ENCODE measurements at regions of chr5 and their contacts with region 1.

Region 1: DNA sequence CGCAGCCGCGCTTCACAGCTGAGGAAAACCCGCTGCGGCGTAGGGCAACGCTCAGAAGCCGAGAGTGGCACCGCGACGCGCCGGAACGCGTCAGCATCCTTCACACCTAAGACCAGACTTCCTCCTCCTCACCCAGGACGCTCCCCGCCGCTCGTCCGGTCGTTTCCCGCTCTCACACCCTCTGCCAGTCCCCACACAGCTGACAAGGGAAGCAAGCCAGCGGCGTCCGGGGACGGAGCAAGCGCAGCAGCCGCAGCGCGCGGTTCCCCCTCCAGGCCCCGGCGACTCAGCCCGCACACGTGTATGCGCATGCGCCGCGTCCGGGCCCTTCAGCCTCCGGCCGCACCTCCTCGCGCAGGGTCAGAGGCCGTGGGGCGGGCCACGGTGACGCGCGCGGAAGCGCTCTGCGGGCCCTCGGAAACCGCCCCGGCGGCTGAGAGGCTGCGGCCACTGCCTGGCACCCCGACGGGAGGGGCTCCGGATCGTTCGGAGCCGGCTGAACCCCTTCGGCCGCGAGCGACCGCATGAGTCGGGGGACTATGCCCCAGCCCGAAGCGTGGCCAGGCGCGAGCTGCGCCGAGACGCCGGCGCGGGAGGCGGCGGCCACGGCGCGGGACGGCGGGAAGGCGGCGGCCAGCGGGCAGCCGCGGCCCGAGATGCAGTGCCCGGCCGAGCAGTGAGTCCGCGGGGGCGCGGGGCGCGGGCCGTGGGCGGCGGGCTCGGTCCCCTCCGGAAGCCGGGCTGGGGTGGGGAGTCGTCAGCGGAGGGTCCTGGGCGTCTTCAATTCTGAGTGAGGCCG is at the start of gene OTULIN:
- DNase-seq: peak; percentile 90
- ATAC-seq: peak; percentile 78
- H3K4me3 Mint-ChIP-seq: peak within 1 kb of the TSS; percentile 97
- H3K27ac Mint-ChIP-seq: peak within 1 kb of the TSS; percentile 99
- H3K4me1 Mint-ChIP-seq: peaks cover 87% of the 10 kb centered on the region
- H3K27me3 Mint-ChIP-seq: no peaks in the 10 kb centered on the region
- CTCF ChIP-seq: no peak
- total RNA-seq, gene OTULIN: 94.0 and 96.5 TPM in 2 replicates

Region 2: GRCh38 chr5:14011089-14012004 is 653.2 kb before region 1 on chr5:
- CTCF ChIA-PET with region 1: no interaction called
- POLR2A ChIA-PET with region 1: no interaction called
- intact Hi-C with region 1: loop called (anchors 2 kb)
- DNase-seq: peak; percentile 72
- ATAC-seq: peak; percentile 89
- H3K4me3 Mint-ChIP-seq: peak overlapping the region; percentile 85
- H3K27ac Mint-ChIP-seq: peak overlapping the region; percentile 73
- H3K4me1 Mint-ChIP-seq: peaks cover 10% of the 10 kb centered on the region
- H3K27me3 Mint-ChIP-seq: peaks cover 20% of the 10 kb centered on the region
- CTCF ChIP-seq: no peak

Region 3: GRCh38 chr5:14264604-14265316 is 399.7 kb before region 1 on chr5:
- CTCF ChIA-PET with region 1: no interaction called
- POLR2A ChIA-PET with region 1: no interaction called
- intact Hi-C with region 1: loop called (anchors 10 kb)
- DNase-seq: peak; percentile 79
- ATAC-seq: peak; percentile 98
- H3K4me3 Mint-ChIP-seq: peak overlapping the region; percentile 81
- H3K27ac Mint-ChIP-seq: peak overlapping the region; percentile 69
- H3K4me1 Mint-ChIP-seq: peaks cover 78% of the 10 kb centered on the region
- H3K27me3 Mint-ChIP-seq: no peaks in the 10 kb centered on the region
- CTCF ChIP-seq: no peak

Region 4: DNA sequence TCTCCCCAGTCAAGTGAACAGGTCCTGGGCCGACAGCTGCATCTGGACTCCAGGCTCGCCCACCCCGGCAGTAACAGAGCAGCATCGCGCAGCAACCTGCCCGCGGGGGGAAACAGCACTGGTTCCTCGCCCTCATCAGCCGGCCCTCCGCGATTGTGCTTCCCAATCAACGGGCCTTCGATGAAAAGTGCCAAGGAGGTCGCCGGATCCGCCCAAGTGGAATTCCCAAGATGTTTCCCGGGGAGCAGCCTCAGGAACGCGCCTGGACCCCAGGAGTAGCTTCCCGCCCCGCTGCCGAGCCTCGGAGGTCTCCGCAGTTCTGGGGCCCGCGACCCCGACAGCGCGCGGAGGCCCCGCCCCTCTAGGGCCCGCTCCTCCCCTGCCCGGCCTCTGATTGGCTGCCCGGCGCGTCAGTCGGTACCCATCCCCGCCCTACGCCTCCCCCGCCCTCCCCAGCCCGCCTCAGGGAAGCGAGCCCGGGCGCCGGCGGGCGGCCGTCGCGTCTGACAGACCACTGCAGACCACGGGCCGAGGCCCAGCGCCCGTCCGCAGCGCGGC is 83.1 kb before region 1 on chr5 and contains the start of gene OTULINL:
- CTCF ChIA-PET with region 1: no interaction called
- POLR2A ChIA-PET with region 1: no interaction called
- intact Hi-C with region 1: loop called (anchors 1 kb)
- DNase-seq: peak; percentile 80
- ATAC-seq: peak; percentile 98
- H3K4me3 Mint-ChIP-seq: peak within 1 kb of the TSS; percentile 74
- H3K27ac Mint-ChIP-seq: no peak within 1 kb of the TSS
- H3K4me1 Mint-ChIP-seq: peaks cover 3% of the 10 kb centered on the region
- H3K27me3 Mint-ChIP-seq: peaks cover 25% of the 10 kb centered on the region
- CTCF ChIP-seq: no peak
- total RNA-seq, gene OTULINL: 0.27 and 0.69 TPM in 2 replicates

Region 5: DNA sequence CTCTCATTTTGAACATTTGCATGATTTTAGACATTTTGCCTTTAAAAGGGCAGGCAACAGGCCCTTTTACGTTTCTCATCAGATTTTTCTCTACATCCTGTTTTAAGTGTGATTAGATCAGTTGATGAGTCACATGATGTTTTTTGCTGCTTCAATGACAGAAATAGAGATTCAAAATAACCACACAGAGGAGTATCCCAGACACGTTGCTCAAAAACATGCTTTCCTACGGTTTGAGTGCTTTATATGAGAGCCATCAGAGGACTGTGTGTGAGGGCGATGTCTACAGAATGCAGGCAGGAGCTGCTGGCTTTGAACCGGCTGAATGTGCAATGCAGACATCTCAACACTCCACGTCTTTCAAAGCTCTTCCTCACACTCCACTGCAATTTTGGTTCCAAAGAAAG is 42.1 kb after region 1 on chr5:
- CTCF ChIA-PET with region 1: no interaction called
- POLR2A ChIA-PET with region 1: no interaction called
- intact Hi-C with region 1: no loop called
- DNase-seq: no peak
- ATAC-seq: peak; percentile 56
- H3K4me3 Mint-ChIP-seq: no peak overlapping the region
- H3K27ac Mint-ChIP-seq: peak overlapping the region; percentile 67
- H3K4me1 Mint-ChIP-seq: peaks cover 23% of the 10 kb centered on the region
- H3K27me3 Mint-ChIP-seq: no peaks in the 10 kb centered on the region
- CTCF ChIP-seq: no peak

Region 6: DNA sequence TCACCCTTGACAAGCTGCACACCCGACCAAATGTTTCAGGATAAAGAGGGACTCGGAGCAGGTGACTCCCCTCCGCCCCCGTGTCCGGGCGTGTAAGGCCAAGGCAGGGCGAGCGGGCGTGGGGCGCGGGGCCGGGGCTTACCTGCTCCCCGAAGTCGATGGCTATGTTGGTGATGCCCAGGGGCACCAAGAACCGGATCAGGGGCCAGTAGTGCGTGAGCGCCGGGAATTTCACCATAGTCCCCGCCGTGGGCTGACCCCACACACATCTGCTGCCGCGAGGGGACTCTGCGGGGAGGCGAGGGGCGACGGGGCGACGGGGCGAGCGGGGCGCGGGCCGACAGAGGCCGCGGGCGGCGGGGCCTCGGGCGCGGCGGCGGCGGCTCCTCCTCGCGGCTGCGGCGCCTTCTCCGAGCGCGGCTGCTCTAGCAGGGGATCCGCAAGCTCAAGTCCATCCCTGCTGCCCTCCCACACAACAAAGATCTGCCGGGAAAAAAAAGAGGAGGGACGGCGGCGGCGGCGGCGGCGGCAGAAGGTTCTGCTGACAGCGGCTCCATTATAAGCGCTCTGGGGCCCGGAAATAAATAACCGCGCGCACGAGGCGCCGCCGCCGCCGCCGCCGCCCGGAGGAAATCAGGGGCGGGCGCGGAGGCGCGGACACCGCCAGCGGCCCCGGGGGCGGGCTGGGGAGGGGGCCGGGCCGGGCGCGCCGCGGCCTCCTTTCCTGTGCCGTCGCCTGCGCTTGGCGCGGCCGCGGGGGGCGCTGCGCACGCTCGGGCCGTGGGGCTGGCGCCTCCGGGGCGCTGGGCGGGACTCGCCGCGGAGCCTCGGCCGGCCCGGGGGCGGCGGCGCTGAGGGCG is 206.9 kb after region 1 on chr5 and contains the start of gene ANKH:
- CTCF ChIA-PET with region 1: interaction called, 3 read pairs
- POLR2A ChIA-PET with region 1: no interaction called
- intact Hi-C with region 1: loop called (anchors 2 kb)
- DNase-seq: peak; percentile 86
- ATAC-seq: peak; percentile 88
- H3K4me3 Mint-ChIP-seq: peak within 1 kb of the TSS; percentile 87
- H3K27ac Mint-ChIP-seq: peak within 1 kb of the TSS; percentile 80
- H3K4me1 Mint-ChIP-seq: peaks cover 22% of the 10 kb centered on the region
- H3K27me3 Mint-ChIP-seq: no peaks in the 10 kb centered on the region
- CTCF ChIP-seq: no peak
- total RNA-seq, gene ANKH: 43.3 and 43.7 TPM in 2 replicates

Region 7: DNA sequence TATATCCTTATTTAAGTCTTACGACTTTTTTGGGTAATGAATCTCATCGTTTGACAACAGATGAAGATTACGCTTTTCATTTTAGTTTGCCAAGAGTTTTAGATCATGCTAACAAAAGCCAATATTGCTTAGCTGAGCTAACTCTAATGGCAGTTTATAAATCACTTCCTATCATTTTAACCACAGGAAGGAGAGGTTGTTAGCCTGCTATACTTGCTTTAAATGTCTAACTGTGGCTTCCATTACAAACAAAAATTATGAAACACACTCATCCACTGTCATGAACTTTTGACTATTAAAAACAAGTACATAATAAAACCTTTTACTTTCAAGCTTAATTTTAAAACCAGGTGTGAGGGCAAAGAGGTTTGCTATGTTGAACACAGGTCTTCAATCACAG is 260.8 kb after region 1 on chr5:
- CTCF ChIA-PET with region 1: no interaction called
- POLR2A ChIA-PET with region 1: no interaction called
- intact Hi-C with region 1: no loop called
- DNase-seq: no peak
- ATAC-seq: no peak
- H3K4me3 Mint-ChIP-seq: no peak overlapping the region
- H3K27ac Mint-ChIP-seq: no peak overlapping the region
- H3K4me1 Mint-ChIP-seq: no peaks in the 10 kb centered on the region
- H3K27me3 Mint-ChIP-seq: no peaks in the 10 kb centered on the region
- CTCF ChIP-seq: no peak

Region 8: GRCh38 chr5:16465544-16466466 is 1801.3 kb after region 1 on chr5 and contains the start of gene ZNF622:
- CTCF ChIA-PET with region 1: no interaction called
- POLR2A ChIA-PET with region 1: no interaction called
- intact Hi-C with region 1: loop called (anchors 5 kb)
- DNase-seq: peak; percentile 82
- ATAC-seq: peak; percentile 93
- H3K4me3 Mint-ChIP-seq: peak within 1 kb of the TSS; percentile 99
- H3K27ac Mint-ChIP-seq: peak within 1 kb of the TSS; percentile 95
- H3K4me1 Mint-ChIP-seq: peaks cover 78% of the 10 kb centered on the region
- H3K27me3 Mint-ChIP-seq: no peaks in the 10 kb centered on the region
- CTCF ChIP-seq: no peak
- total RNA-seq, gene ZNF622: 35.5 and 39.5 TPM in 2 replicates